Gastrocnemius medialis (tissue), 4 donors: ENCODE measurements at regions of chrX and their contacts with region 1.

Region 1: DNA sequence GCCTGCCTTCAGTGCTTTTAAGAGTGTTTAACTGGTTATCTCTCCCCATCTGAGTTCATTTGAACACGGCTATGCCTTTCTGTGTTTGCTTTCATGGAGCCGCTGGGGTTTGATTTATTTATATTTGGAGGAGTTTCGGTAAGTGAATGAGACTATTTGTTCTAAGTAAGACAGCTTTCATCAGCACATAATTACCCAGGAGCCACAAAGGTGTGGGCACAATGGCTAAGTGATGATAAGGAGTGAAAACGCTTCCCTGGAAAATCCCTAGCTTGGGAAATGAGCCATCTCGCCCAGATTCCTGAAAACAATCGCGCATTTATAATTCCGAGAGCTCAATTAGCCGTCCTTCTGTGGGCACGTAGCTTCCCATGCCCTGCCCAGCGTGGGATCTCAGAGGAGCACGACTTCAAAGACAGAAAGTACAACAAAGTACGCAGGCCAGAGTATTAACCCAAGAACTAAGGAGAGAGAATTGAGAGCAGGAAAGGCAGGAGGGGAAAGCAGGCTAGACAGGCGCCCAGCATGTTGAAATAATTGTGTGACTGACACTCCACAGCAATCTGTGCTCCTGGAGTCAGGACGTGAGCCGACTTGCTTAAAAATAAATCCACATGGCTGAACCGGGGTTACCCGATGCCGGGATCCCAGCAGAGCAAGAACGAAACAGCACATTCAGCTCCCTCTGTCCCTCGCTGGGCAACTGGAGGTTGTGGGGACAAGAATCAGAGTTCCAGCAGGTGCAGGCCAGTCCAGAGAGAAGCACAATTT is 99.0 kb downstream of the DHRSX start:
- DNase-seq: peak; percentile 90 to 93
- ATAC-seq: peak; percentile 87 to 93
- H3K4me3 ChIP-seq: peak overlapping the region in 3 of 4 donors; percentile 22 to 31 (median 28)
- H3K27ac ChIP-seq: peak overlapping the region; percentile 81 to 92 (median 88)
- H3K4me1 ChIP-seq: peaks cover 10 to 27% of the 10 kb centered on the region in 2 donors
- H3K27me3 ChIP-seq: no peaks in the 10 kb centered on the region
- CTCF ChIP-seq: no peak
- POLR2A ChIP-seq: peak in 1 of 2 donors; percentile 56

Region 2: GRCh38 chrX:2342874-2343273 is 58.9 kb before region 1 on chrX:
- in situ Hi-C with region 1: no loop called
- intact Hi-C with region 1: loop called (anchors 5 kb)
- DNase-seq: peak in 1 of 2 donors; percentile 5
- ATAC-seq: no peak
- H3K4me3 ChIP-seq: no peak overlapping the region
- H3K27ac ChIP-seq: peak overlapping the region; percentile 82 to 92 (median 88)
- H3K4me1 ChIP-seq: peaks cover 14 to 16% of the 10 kb centered on the region in 2 donors
- H3K27me3 ChIP-seq: no peaks in the 10 kb centered on the region
- CTCF ChIP-seq: no peak
- POLR2A ChIP-seq: no peak

Region 3: DNA sequence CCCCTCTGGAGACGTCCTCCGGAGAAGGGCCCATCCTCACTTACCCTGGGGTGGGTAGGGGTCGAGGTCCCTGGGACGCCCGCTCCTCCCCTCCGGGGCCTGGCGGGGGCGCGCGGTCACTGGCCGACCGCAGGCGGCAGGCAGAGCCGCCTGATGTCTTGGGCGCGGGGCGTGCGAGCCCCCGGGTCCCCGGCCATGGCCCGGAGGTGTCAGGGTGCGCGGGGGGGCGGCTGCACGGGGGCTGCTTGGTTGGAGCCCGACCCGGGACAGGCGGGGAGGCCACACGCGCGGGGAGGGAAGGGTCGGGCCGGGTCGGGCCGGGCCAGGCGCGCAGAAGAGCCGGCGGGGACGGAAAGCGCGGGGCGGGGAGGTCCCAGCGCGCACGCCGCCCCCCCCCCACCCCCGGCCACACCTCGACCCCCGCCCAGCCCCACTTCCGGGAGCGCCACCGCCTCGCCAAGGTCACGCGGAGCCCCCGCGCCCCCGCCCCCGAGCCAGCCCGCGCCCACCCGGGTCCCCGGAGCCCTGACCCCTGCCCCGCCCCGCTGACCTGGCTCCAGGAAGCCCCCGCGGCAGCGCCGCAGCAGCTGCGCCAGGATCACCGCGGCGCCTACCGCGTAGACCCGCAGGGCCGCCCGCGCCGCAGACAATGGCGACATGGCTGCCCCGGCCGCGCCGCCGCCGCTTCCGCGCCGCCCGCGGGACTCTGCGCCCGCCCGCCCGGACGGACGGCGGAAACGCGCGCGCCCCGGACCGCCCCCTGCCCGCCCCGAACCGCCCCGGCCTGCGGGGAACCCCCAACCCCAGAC is 98.7 kb after region 1 on chrX and contains the starts of genes DHRSX and ZBED1:
- in situ Hi-C with region 1: no loop called
- intact Hi-C with region 1: loop called (anchors 5 kb)
- DNase-seq: peak in 1 of 2 donors; percentile 33
- ATAC-seq: peak; percentile 43
- H3K4me3 ChIP-seq: peak within 1 kb of the TSS; percentile 63 to 88 (median 69)
- H3K27ac ChIP-seq: peak within 1 kb of the TSS; percentile 81 to 99 (median 94)
- H3K4me1 ChIP-seq: peaks cover 23 to 29% of the 10 kb centered on the region in 2 donors
- H3K27me3 ChIP-seq: no peaks in the 10 kb centered on the region
- CTCF ChIP-seq: no peak
- POLR2A ChIP-seq: peak in 1 of 2 donors; percentile 24
- total RNA-seq, gene DHRSX: 9.8 to 31.1 (median 13.6) TPM
- total RNA-seq, gene ZBED1: 76.8 to 191 (median 131) TPM